ENCODE measurements at regions of chr18 and their contacts with region 1.

Region 1: DNA sequence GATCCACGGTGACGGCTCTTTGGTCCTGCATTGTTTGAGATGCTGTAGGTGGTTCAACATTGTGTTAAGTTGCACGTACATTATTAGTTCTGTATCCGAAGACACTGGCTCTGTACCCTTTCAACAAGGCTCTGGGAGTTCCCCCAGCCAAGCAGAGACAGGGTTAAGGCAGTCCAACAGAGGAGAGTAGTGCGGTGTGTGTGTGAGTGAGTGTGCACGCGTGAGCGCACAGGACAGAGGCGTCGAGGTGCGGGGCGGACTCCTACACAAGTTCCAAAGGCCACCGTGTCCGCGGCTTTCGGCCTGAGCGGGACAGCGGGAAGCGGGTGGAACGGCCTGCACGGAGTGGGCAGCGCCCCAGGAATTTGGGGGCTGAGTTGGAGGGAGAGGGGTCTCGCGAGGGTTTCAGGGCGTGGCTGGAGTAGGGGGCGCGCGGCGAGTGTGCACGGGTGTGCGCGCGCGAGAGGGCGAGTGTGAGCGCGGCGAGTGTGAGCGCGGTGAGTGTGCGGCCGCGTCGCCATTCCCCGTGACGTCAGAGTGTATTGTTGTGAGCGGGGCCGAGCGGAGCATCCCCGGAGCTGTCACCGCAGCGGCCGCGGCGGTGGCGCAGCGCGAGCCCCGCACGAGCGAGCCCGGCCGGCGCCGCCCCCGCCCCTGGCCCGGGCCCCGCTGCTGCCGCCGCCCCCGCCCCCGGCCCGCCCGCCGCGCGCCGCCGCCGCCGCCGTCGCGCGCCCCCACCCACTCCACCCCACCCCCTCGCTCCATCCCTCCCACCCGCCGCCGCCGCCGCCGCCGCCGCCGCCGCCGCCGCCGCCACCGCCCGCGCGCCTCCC is at the start of gene ASXL3:
- DNase-seq: peak; percentile 23
- H3K4me3 ChIP-seq: peak within 1 kb of the TSS; percentile 81
- H3K27ac ChIP-seq: no peak within 1 kb of the TSS
- H3K4me1 ChIP-seq: peaks cover 41% of the 10 kb centered on the region
- CTCF ChIP-seq: no peak
- total RNA-seq, gene ASXL3: 1.6 and 2.6 TPM in 2 replicates

Region 2: GRCh38 chr18:33606621-33607020 is 28.7 kb after region 1 on chr18:
- CTCF ChIA-PET with region 1: no interaction called
- POLR2A ChIA-PET with region 1: no interaction called
- intact Hi-C with region 1: no loop called
- DNase-seq: peak; percentile 13
- H3K4me3 ChIP-seq: no peak overlapping the region
- H3K27ac ChIP-seq: no peak overlapping the region
- H3K4me1 ChIP-seq: peaks cover 21% of the 10 kb centered on the region
- CTCF ChIP-seq: peak; percentile 43; the same call in 1 of the 2 replicates

Region 3: DNA sequence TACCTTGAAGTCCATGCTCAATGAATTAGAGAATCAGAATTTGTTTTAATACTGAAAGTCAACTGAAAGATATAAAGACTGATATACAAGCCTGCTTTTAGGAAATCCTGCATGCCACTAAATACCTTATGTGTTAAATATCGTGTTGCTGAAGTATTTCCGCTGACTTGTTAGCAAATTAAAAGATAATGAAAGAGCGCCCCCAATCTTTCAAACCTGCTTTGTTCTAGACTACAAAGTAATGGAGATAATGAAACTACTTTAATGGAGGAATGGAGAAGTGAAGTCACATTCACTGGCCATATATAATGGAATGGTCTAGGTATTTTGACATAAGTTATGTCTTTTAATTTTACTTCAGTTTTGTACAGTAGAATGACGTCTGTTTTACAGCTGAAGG is 95.8 kb after region 1 on chr18:
- CTCF ChIA-PET with region 1: no interaction called
- POLR2A ChIA-PET with region 1: no interaction called
- intact Hi-C with region 1: loop called (anchors 5 kb)
- DNase-seq: no peak
- H3K4me3 ChIP-seq: no peak overlapping the region
- H3K27ac ChIP-seq: no peak overlapping the region
- H3K4me1 ChIP-seq: peaks cover 46% of the 10 kb centered on the region
- CTCF ChIP-seq: peak; percentile 49; the same call in 1 of the 2 replicates

Measured in OCI-LY7 (cell line).